ENCODE measurements at regions of chr14 and their contacts with region 1.

Region 1: DNA sequence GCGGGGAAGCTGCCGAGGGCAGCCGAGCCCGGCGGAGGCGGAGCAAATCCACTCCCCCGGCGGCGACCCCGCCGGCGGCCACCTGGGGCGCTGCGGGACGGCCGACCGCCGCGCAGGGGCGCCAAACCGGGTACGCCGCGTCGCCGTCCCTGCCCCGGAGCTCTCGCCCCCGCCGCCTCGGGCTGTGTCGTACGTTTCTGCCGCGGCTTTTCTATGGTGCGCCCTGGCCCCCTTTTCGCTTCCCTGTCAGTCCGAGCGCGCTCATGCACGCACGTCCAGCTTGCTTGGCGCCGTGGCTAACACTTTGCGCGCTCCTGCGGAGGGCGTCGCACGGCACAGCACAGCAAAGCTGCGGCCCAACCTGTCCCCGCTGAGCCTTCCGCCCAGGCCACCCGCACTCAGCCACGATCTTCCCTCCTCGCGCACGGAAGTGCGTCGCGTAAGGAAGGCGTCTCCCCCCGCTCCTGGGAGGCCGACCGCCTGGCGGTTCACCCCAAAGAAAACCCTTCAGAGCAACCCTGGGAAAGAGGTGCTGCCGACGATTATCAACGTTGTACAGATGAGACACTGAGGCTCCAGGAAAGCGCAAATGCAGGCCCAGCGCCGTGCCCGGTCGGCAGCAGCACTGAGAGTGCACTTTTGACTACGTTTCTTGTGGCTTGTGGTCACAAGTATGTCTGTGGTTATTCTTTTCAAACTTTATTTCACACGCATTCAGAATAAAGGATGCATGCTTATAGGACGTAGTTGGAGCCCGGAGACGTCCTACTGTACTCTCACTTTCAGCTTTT is at the start of gene HECTD1:
- DNase-seq: peak; percentile 88
- H3K4me3 ChIP-seq: peak within 1 kb of the TSS; percentile 74 to 81 (median 76)
- H3K27ac ChIP-seq: peak within 1 kb of the TSS; percentile 83
- H3K4me1 ChIP-seq: peaks cover 18% of the 10 kb centered on the region
- H3K27me3 ChIP-seq: no peaks in the 10 kb centered on the region
- CTCF ChIP-seq: peak; percentile 42 to 43
- total RNA-seq, gene HECTD1: 120 to 162 TPM

Region 2: GRCh38 chr14:31229638-31230229 is 21.8 kb after region 1 on chr14:
- CTCF ChIA-PET with region 1: no interaction called
- dilution Hi-C with region 1: no loop called
- in situ Hi-C with region 1: no loop called
- intact Hi-C with region 1: loop called (anchors 1 kb)
- DNase-seq: peak; percentile 97
- H3K4me3 ChIP-seq: no peak overlapping the region
- H3K27ac ChIP-seq: peak overlapping the region; percentile 45
- H3K4me1 ChIP-seq: peaks cover 18% of the 10 kb centered on the region
- H3K27me3 ChIP-seq: no peaks in the 10 kb centered on the region
- CTCF ChIP-seq: no peak

Region 3: GRCh38 chr14:31263485-31264133 is 55.7 kb after region 1 on chr14:
- CTCF ChIA-PET with region 1: no interaction called
- dilution Hi-C with region 1: no loop called
- in situ Hi-C with region 1: loop called in 1 of 2 experiments (anchors 10 kb)
- intact Hi-C with region 1: loop called (anchors 1 kb)
- DNase-seq: peak; percentile 98
- H3K4me3 ChIP-seq: no peak overlapping the region
- H3K27ac ChIP-seq: peak overlapping the region; percentile 78
- H3K4me1 ChIP-seq: peaks cover 41% of the 10 kb centered on the region
- H3K27me3 ChIP-seq: no peaks in the 10 kb centered on the region
- CTCF ChIP-seq: no peak

Region 4: DNA sequence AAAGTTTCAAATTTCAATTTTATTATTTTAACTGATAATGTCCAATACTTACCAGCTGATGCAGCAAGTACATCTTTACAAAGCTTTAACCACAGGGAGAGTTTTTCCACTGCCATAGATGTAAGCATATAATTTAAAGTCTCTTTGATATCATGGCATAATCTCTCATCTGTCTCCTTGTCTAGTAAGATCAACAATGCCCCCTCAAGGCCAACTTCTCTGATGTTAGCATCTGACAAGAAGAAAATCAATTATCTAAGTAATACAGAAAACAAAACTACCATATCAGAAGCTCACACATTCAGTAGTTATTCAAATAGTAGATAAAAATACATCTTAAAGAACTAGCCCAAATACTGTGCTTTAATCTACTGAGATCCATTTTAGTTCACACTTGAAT is 118.2 kb after region 1 on chr14:
- CTCF ChIA-PET with region 1: interaction called, 3 read pairs
- dilution Hi-C with region 1: no loop called
- in situ Hi-C with region 1: no loop called
- intact Hi-C with region 1: loop called (anchors 1 kb)
- DNase-seq: peak; percentile 9
- H3K4me3 ChIP-seq: no peak overlapping the region
- H3K27ac ChIP-seq: no peak overlapping the region
- H3K4me1 ChIP-seq: no peaks in the 10 kb centered on the region
- H3K27me3 ChIP-seq: no peaks in the 10 kb centered on the region
- CTCF ChIP-seq: peak; percentile 7 to 34

Region 5: DNA sequence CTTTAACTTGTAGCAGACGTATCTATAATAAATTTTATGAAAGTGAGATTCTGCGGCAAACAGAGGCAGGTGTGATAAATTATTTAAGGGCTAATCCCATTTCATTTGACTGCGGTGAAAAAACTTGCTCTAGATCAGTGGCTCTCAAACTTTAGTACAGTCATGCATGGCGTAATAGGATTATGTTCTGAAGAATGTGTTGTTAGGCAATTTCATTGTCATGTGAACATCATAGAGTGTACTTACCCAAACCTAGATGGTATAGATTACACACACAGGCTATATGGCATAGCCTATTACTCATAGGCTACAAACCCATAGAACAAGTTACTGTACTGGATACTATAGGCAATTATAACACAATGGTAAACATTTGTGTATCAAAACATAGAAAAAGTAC is 128.7 kb after region 1 on chr14:
- CTCF ChIA-PET with region 1: no interaction called
- dilution Hi-C with region 1: no loop called
- in situ Hi-C with region 1: no loop called
- intact Hi-C with region 1: no loop called
- DNase-seq: peak; percentile 72
- H3K4me3 ChIP-seq: no peak overlapping the region
- H3K27ac ChIP-seq: no peak overlapping the region
- H3K4me1 ChIP-seq: no peaks in the 10 kb centered on the region
- H3K27me3 ChIP-seq: no peaks in the 10 kb centered on the region
- CTCF ChIP-seq: no peak

Region 6: GRCh38 chr14:31419967-31420318 is 212.0 kb after region 1 on chr14:
- CTCF ChIA-PET with region 1: no interaction called
- dilution Hi-C with region 1: no loop called
- in situ Hi-C with region 1: no loop called
- intact Hi-C with region 1: loop called (anchors 2 kb)
- DNase-seq: peak; percentile 58
- H3K4me3 ChIP-seq: peak overlapping the region; percentile 92 to 96 (median 95)
- H3K27ac ChIP-seq: peak overlapping the region; percentile 59
- H3K4me1 ChIP-seq: peaks cover 5% of the 10 kb centered on the region
- H3K27me3 ChIP-seq: no peaks in the 10 kb centered on the region
- CTCF ChIP-seq: no peak